Activated CD4-positive, alpha-beta T cell treated with anti-CD3 and anti-CD28 coated beads, Interleukin-2, amount 10 ng/mL, durations not matched to agents 24 days and 14 days (primary cell): ENCODE measurements at regions of chr3 and their contacts with region 1.

Region 1: GRCh38 chr3:30347679-30348216 is 258.7 kb upstream of the TGFBR2 start:
- DNase-seq: peak; percentile 85
- H3K4me3 Mint-ChIP-seq: peak overlapping the region; percentile 53
- H3K27ac Mint-ChIP-seq: peak overlapping the region; percentile 82
- H3K4me1 Mint-ChIP-seq: peaks cover 63% of the 10 kb centered on the region
- H3K27me3 Mint-ChIP-seq: peaks cover 8% of the 10 kb centered on the region

Region 2: DNA sequence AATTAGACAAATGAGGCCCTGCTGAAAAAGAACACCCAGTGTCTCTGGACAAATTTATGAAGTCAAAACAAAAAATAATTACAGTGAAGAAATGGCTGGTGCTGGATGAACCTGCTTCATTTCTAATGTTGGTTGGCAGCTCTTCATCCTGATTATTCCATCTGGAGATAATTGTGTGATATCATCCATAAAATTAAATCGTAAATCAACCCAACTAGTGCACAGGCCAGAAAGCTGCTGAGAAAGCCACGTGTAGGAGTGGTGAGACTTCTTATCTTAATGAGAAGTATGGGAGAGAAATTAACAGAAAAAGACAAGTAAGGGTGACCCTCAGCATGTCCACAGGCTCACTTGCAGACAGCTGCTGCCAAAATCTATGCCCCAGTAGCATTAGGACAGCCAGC is 206.6 kb before region 1 on chr3:
- intact Hi-C with region 1: no loop called
- DNase-seq: no peak
- H3K4me3 Mint-ChIP-seq: no peak overlapping the region
- H3K27ac Mint-ChIP-seq: no peak overlapping the region
- H3K4me1 Mint-ChIP-seq: no peaks in the 10 kb centered on the region
- H3K27me3 Mint-ChIP-seq: no peaks in the 10 kb centered on the region

Region 3: DNA sequence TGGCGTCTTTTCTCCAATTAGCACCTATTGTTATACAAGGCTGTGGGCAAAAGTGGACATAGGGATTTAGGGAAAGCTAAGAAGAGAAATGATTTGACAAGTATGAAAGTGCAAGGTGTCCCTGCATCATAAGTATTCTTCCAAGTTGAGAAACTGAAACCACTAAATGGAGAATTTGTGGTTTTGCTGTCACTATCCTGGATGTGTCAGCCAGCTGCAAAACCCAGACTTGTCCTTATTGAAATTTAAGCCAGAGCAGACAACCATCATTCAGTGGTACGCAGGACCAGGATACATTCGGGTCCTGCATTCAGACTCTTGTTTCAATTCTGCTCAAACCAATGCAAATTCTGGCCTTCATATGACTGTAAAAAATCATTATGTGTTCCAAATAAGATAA is 126.1 kb before region 1 on chr3:
- intact Hi-C with region 1: loop called (anchors 5 kb)
- DNase-seq: peak; percentile 65
- H3K4me3 Mint-ChIP-seq: no peak overlapping the region
- H3K27ac Mint-ChIP-seq: no peak overlapping the region
- H3K4me1 Mint-ChIP-seq: peaks cover 21% of the 10 kb centered on the region
- H3K27me3 Mint-ChIP-seq: no peaks in the 10 kb centered on the region

Region 4: GRCh38 chr3:30475038-30475808 is 127.5 kb after region 1 on chr3:
- intact Hi-C with region 1: loop called (anchors 2 kb)
- DNase-seq: peak; percentile 73
- H3K4me3 Mint-ChIP-seq: peak overlapping the region; percentile 7
- H3K27ac Mint-ChIP-seq: peak overlapping the region; percentile 18
- H3K4me1 Mint-ChIP-seq: peaks cover 33% of the 10 kb centered on the region
- H3K27me3 Mint-ChIP-seq: no peaks in the 10 kb centered on the region

Region 5: DNA sequence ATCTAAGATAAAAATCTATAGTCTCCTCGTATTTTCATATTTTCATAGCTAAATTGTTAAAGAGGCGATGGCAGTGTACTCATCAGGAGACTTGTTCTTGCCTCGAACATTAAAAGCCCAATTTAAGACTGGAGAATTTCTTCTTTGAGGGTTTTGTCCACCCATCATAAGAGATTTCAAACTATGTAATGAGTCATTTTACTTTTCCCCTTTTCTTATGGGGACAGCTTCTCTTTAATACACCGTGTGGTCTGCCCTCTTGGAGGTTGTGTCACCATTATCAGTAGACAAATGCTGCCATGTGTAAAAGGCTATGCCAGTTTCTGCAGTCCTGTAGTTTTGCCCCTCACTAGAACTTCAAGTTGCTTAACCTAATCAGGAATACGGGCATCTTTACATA is 275.6 kb after region 1 on chr3:
- intact Hi-C with region 1: loop called (anchors 5 kb)
- DNase-seq: peak; percentile 58
- H3K4me3 Mint-ChIP-seq: peak overlapping the region; percentile 77
- H3K27ac Mint-ChIP-seq: peak overlapping the region; percentile 94
- H3K4me1 Mint-ChIP-seq: peaks cover 78% of the 10 kb centered on the region
- H3K27me3 Mint-ChIP-seq: no peaks in the 10 kb centered on the region

Region 6: GRCh38 chr3:30672959-30673358 is 325.2 kb after region 1 on chr3:
- intact Hi-C with region 1: loop called (anchors 5 kb)
- DNase-seq: no peak
- H3K4me3 Mint-ChIP-seq: peak overlapping the region; percentile 64
- H3K27ac Mint-ChIP-seq: peak overlapping the region; percentile 58
- H3K4me1 Mint-ChIP-seq: peaks cover 83% of the 10 kb centered on the region
- H3K27me3 Mint-ChIP-seq: no peaks in the 10 kb centered on the region

Region 7: DNA sequence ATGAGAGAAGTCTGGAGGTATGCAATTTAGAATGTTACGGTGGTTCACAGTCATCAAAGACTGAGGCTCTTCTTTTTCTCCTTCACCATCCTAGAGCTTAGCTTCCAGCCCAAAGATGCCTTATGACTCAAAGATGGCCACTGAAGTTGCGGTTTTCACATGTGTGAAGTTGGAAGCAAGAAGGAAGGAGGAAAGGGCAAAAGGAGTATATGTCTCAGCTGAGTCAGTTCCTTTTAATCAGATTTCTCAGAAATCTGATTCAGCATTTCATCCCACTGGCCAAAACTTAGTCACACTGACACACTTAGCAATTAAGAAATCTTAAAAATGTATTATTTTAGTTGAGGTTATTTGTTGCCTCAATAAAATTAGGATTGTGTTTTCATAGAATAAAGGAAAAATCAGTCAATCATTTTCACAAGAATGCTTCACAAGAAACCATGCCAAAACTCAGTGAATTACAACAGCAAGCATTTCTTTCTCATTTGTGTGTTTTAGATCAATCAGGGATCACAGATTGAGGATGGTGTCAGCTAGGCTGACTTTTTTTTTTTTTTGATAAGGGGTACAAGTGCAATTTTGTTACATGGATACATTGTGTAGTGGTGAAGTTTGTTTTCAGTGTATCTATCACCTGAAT is 757.8 kb after region 1 on chr3:
- intact Hi-C with region 1: loop called (anchors 10 kb)
- DNase-seq: peak; percentile 66
- H3K4me3 Mint-ChIP-seq: no peak overlapping the region
- H3K27ac Mint-ChIP-seq: no peak overlapping the region
- H3K4me1 Mint-ChIP-seq: peaks cover 39% of the 10 kb centered on the region
- H3K27me3 Mint-ChIP-seq: no peaks in the 10 kb centered on the region